ENCODE measurements at regions of chr19 and their contacts with region 1.

Region 1: DNA sequence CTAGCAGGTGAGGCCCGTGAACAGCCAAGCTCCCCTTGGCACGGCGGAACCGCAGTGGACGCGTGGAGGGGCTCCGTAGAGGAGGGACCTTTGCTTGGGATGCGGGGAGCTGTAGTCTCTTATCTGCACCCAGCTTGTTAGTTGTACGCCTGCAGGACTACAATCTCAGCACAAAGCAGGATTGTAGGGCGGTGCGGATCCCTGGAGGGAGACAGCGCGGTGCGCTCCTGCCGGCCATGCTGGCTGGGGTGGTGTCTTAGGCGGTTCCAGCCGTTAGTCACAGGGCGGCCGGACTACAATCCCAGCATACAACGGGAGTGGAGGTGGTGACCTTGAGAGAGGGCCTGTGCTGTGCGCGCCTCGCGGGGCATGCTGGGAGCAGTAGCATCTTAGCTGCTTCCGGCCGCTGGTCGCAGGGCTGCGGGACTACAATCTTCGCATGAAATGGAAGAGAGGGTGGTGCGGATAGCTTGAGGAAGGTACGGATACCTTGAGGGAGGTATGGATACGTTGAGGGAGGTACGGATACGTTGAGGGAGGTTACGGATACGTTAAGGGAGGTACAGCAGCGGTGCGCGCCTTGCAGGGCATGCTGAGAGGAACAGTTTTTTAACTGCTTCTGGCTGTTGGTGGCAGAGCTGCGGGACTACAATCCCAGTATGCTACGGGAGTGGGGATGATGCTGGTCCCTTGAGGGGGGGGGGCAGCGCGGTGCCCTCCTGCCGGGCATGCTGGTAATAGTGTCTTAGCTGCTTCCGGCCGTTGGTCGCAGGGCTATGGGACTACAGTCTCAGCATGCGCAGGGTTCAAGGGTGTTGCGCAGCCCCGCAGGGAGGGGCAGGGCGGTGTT is 1419.1 kb downstream of the UQCRFS1 start:
- DNase-seq: peak; percentile 92
- ATAC-seq: peak; percentile 89
- H3K4me3 ChIP-seq: peak overlapping the region; percentile 73 to 98 (median 85)
- H3K4me3 Mint-ChIP-seq: peak overlapping the region; percentile 99
- H3K27ac ChIP-seq: peak overlapping the region; percentile 71 to 84
- H3K27ac Mint-ChIP-seq: peak overlapping the region; percentile 92
- H3K4me1 ChIP-seq: peaks cover 15 to 18% of the 10 kb centered on the region in 2 donors
- H3K4me1 Mint-ChIP-seq: peaks cover 30% of the 10 kb centered on the region
- H3K27me3 ChIP-seq: no peaks in the 10 kb centered on the region
- H3K27me3 Mint-ChIP-seq: no peaks in the 10 kb centered on the region
- CTCF ChIP-seq: no peak

Region 2: DNA sequence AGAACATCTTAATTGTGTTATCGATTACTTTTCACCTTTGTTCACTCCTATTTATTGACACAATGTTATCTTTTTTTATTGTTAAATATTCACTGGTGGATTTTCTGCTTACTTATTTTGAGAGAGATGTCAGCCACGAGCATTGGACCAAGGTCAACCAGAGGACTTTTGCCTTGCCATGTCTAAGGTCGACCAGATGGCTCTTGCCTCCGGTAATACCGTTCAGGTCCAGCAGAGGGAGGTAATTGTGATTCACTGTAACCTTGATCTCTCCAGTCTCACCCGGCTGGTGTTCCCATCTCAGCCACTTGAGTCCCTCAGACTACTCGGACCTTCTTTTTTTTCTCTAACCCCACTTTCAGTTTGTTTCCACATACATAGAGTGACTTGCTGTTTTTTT is 19.0 kb before region 1 on chr19:
- CTCF ChIA-PET with region 1: interaction called, 3 read pairs
- POLR2A ChIA-PET with region 1: interaction called, 3 read pairs
- intact Hi-C with region 1: loop called (anchors 1 kb)
- DNase-seq: peak; percentile 26
- ATAC-seq: no peak
- H3K4me3 ChIP-seq: no peak overlapping the region
- H3K4me3 Mint-ChIP-seq: no peak overlapping the region
- H3K27ac ChIP-seq: no peak overlapping the region
- H3K27ac Mint-ChIP-seq: no peak overlapping the region
- H3K4me1 ChIP-seq: peaks cover 2 to 5% of the 10 kb centered on the region in 2 donors
- H3K4me1 Mint-ChIP-seq: peaks cover 6% of the 10 kb centered on the region
- H3K27me3 ChIP-seq: no peaks in the 10 kb centered on the region
- H3K27me3 Mint-ChIP-seq: no peaks in the 10 kb centered on the region
- CTCF ChIP-seq: peak; percentile 44

Region 3: GRCh38 chr19:27779954-27780353 is 13.9 kb before region 1 on chr19:
- CTCF ChIA-PET with region 1: interaction called, 3 read pairs
- POLR2A ChIA-PET with region 1: interaction called, 3 read pairs
- intact Hi-C with region 1: loop called (anchors 1 kb)
- DNase-seq: peak; percentile 70
- ATAC-seq: peak; percentile 91
- H3K4me3 ChIP-seq: peak overlapping the region in 4 of 5 experiments; percentile 4 to 49 (median 20)
- H3K4me3 Mint-ChIP-seq: peak overlapping the region; percentile 76
- H3K27ac ChIP-seq: peak overlapping the region; percentile 68 to 83
- H3K27ac Mint-ChIP-seq: peak overlapping the region; percentile 92
- H3K4me1 ChIP-seq: peaks cover 12 to 16% of the 10 kb centered on the region in 2 donors
- H3K4me1 Mint-ChIP-seq: peaks cover 18% of the 10 kb centered on the region
- H3K27me3 ChIP-seq: no peaks in the 10 kb centered on the region
- H3K27me3 Mint-ChIP-seq: no peaks in the 10 kb centered on the region
- CTCF ChIP-seq: no peak

Region 4: DNA sequence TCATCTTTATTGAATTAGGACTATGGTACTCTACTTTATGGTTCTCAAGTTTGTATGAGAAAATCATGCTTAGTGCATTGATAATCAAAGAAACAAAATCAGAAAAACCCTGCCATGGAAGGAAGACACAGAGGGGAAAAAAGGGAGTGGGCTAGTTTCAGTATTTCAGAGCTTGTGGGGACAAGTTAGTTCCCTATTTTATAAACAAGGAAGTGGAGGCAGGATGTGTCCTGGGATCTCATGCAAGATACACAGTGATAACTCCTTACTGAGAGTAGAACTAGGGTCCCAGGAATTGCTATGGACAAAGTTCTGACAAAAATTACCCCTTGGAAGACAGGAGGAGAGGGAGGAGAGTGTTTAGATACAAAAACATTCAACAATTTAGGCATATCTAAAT is 141.8 kb after region 1 on chr19:
- CTCF ChIA-PET with region 1: no interaction called
- POLR2A ChIA-PET with region 1: no interaction called
- intact Hi-C with region 1: no loop called
- DNase-seq: no peak
- ATAC-seq: no peak
- H3K4me3 ChIP-seq: no peak overlapping the region
- H3K4me3 Mint-ChIP-seq: no peak overlapping the region
- H3K27ac ChIP-seq: no peak overlapping the region
- H3K27ac Mint-ChIP-seq: no peak overlapping the region
- H3K4me1 ChIP-seq: no peaks in the 10 kb centered on the region
- H3K4me1 Mint-ChIP-seq: no peaks in the 10 kb centered on the region
- H3K27me3 ChIP-seq: no peaks in the 10 kb centered on the region
- H3K27me3 Mint-ChIP-seq: no peaks in the 10 kb centered on the region
- CTCF ChIP-seq: no peak

Measured in B cell (primary cell).